MCF 10A (cell line): ENCODE measurements at regions of chr12 and their contacts with region 1.

Region 1: GRCh38 chr12:75623631-75624118 is 112.3 kb upstream of the KRR1 start:
- DNase-seq: peak; percentile 97
- H3K4me3 Mint-ChIP-seq: no peak overlapping the region
- H3K27ac Mint-ChIP-seq: peak overlapping the region; percentile 82
- H3K4me1 Mint-ChIP-seq: peaks cover 24% of the 10 kb centered on the region
- H3K27me3 Mint-ChIP-seq: no peaks in the 10 kb centered on the region
- CTCF ChIP-seq: peak; percentile 68

Region 2: GRCh38 chr12:75602106-75602505 is 21.6 kb before region 1 on chr12:
- CTCF ChIA-PET with region 1: interaction called, 13 read pairs
- POLR2A ChIA-PET with region 1: no interaction called
- intact Hi-C with region 1: no loop called
- DNase-seq: no peak
- H3K4me3 Mint-ChIP-seq: no peak overlapping the region
- H3K27ac Mint-ChIP-seq: no peak overlapping the region
- H3K4me1 Mint-ChIP-seq: peaks cover 5% of the 10 kb centered on the region
- H3K27me3 Mint-ChIP-seq: no peaks in the 10 kb centered on the region
- CTCF ChIP-seq: no peak

Region 3: GRCh38 chr12:75722714-75723200 is 99.1 kb after region 1 on chr12:
- CTCF ChIA-PET with region 1: interaction called, 12 read pairs
- POLR2A ChIA-PET with region 1: interaction called, 3 read pairs
- intact Hi-C with region 1: loop called (anchors 10 kb)
- DNase-seq: peak; percentile 92
- H3K4me3 Mint-ChIP-seq: peak overlapping the region; percentile 5
- H3K27ac Mint-ChIP-seq: peak overlapping the region; percentile 94
- H3K4me1 Mint-ChIP-seq: peaks cover 49% of the 10 kb centered on the region
- H3K27me3 Mint-ChIP-seq: no peaks in the 10 kb centered on the region
- CTCF ChIP-seq: no peak

Region 4: GRCh38 chr12:75977952-75978671 is 354.4 kb after region 1 on chr12:
- CTCF ChIA-PET with region 1: no interaction called
- POLR2A ChIA-PET with region 1: interaction called, 3 read pairs
- intact Hi-C with region 1: loop called (anchors 5 kb)
- DNase-seq: peak; percentile 99
- H3K4me3 Mint-ChIP-seq: peak overlapping the region; percentile 19
- H3K27ac Mint-ChIP-seq: peak overlapping the region; percentile 81
- H3K4me1 Mint-ChIP-seq: peaks cover 32% of the 10 kb centered on the region
- H3K27me3 Mint-ChIP-seq: no peaks in the 10 kb centered on the region
- CTCF ChIP-seq: no peak

Region 5: GRCh38 chr12:76455582-76456345 is 832.1 kb after region 1 on chr12:
- CTCF ChIA-PET with region 1: interaction called, 3 read pairs
- POLR2A ChIA-PET with region 1: no interaction called
- intact Hi-C with region 1: loop called (anchors 1 kb)
- DNase-seq: peak; percentile 87
- H3K4me3 Mint-ChIP-seq: no peak overlapping the region
- H3K27ac Mint-ChIP-seq: peak overlapping the region; percentile 84
- H3K4me1 Mint-ChIP-seq: peaks cover 21% of the 10 kb centered on the region
- H3K27me3 Mint-ChIP-seq: no peaks in the 10 kb centered on the region
- CTCF ChIP-seq: peak; percentile 49